Sciatic nerve (tissue), 2 donors: ENCODE measurements at regions of chr4 and their contacts with region 1.

Region 1: DNA sequence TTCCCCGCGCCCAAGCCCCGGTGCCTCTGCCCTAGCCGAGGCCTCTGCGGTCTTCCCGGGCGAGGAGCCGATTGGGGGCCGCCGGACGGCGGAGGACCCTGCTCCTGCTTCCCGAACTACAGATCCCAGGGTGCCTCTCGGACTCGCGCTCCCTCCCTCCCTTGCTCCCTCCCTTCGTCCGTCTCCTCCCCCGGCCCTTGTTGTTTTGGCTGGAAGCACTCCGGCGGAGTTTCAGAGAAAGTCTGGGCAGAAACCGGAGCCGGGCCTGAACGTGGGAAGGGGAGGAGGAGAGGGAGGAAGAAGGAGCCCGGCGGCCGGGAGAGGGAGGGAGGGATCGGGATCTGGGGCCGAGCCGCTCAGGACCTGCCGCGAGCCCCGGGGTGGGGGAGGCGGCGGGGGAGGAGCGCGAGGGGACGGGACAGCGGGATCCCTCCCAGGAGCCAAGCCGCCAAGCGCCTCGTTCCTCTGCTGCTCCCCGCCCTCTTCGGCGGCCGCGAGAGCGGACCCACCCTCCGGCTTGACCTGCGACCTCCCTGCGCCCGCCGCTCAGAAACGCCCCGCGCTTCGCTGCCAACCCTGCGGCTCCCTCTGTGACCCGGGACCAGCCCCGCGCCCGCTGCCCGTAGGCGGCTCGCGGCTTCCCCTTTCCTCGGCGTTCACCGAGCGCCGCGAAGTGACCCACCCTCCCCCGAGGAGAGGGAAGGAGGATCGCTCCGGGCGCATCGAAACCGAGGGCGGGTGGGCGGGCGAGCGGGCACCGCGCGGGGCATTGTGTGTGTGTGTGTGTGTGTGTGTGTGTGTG is 496 bp upstream of the GAB1 start:
- DNase-seq: peak; percentile 95
- ATAC-seq: peak; percentile 92

Region 2: GRCh38 chr4:143195581-143195980 is 140.6 kb before region 1 on chr4:
- intact Hi-C with region 1: loop called (anchors 10 kb)
- DNase-seq: no peak
- ATAC-seq: no peak

Region 3: GRCh38 chr4:143482840-143483239 is 146.7 kb after region 1 on chr4:
- intact Hi-C with region 1: loop called (anchors 5 kb)
- DNase-seq: no peak
- ATAC-seq: peak; percentile 83

Region 4: DNA sequence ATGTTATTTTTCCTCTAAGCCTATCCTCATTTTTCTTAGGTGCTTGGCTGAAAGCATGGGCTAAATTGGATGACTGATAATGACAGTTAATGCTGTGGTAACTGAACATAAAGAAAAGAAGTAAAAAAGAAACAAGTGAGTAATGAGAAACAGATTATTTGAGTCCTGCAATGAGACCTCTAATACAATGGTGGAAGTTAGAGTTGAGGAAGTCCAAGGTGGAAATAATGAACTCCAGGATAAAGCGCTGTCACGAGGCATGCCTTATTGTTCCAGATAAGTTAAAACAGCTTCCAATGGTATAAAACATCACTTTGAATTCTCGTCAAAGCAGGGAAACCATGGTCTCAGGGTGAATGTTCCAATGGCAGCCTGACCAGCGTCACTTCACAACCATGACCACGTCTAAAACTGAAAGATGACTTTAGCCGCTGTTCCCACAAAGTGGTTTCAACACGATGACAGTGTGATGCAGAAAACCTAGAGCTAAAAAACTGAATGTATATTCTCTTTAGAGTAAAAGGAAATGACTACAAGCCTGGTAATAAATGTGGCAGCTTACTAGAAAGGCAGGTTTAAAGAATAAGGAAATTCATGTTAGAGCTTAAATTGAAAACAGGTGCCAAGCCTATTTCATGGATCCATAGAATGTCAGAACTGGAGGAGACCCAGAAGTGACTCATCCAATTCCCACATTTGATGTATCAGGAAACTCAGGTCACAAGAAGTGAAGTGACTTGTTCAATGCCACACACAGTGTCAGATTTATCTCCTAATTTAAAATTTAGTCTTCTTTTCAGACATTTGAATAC is 1007.0 kb after region 1 on chr4:
- intact Hi-C with region 1: no loop called
- DNase-seq: no peak
- ATAC-seq: no peak